ENCODE measurements at regions of chr11 and their contacts with region 1.

Region 1: DNA sequence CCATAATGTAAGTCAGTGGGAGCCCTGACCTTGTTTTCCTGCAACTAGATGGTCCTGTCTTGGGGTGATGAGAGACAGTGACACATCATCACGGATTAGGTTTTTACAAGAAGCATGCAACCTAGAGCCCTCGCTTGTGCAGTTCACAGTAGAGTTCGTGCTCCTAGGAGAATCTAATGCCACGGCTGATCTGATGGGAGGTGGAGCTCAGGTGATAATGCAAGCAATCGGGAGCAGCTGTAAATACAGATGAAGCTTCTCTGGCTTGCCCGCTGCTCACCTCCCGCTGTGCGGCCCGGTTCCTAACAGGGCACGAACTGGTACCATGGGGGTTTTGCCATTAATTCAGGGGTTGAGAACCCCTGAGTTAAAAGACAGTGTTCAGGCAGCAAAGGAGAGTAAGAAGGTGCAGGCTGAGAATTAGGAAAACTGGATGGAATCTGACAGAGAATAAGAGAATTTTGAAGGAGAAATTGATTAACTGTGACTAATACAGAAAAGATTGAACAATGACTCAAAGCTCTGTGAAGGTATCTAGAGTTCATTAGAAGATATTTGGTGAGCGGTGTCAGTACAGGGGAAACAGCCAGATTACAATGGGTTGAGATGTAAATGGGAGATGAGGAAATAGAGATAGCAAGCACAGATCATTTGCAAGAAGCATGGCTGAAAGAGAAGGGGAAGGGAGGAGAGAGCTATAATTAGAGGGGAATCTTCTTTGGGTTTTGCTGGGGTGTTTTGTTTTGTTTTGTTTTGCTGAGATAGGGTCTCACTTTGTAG is 21.0 kb downstream of the WEE1 start:
- DNase-seq: no peak
- ATAC-seq: no peak
- H3K4me3 Mint-ChIP-seq: no peak overlapping the region
- H3K27ac Mint-ChIP-seq: peak overlapping the region; percentile 28
- H3K4me1 Mint-ChIP-seq: peaks cover 36% of the 10 kb centered on the region
- H3K27me3 Mint-ChIP-seq: no peaks in the 10 kb centered on the region
- CTCF ChIP-seq: no peak

Region 2: DNA sequence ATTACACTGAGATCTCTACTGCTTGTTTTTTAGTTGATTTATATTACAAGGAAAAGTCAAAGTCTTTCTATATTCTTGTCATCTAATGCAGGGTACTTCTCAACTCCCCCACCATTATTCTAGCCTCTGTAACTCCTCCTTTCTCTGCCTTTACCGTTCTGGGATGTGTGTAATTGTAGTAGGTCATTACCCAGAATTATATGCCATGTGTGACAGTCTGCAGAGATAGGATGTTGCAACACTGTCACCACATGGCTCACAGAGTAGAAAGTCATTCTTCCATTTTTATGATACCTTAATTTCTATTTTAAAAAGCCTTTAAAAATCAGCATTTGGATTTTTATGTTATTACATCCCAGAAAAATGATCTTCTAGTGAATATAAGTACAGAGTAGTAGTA is 101.0 kb before region 1 on chr11:
- CTCF ChIA-PET with region 1: no interaction called
- POLR2A ChIA-PET with region 1: no interaction called
- intact Hi-C with region 1: no loop called
- DNase-seq: no peak
- ATAC-seq: no peak
- H3K4me3 Mint-ChIP-seq: no peak overlapping the region
- H3K27ac Mint-ChIP-seq: no peak overlapping the region
- H3K4me1 Mint-ChIP-seq: no peaks in the 10 kb centered on the region
- H3K27me3 Mint-ChIP-seq: no peaks in the 10 kb centered on the region
- CTCF ChIP-seq: no peak

Region 3: DNA sequence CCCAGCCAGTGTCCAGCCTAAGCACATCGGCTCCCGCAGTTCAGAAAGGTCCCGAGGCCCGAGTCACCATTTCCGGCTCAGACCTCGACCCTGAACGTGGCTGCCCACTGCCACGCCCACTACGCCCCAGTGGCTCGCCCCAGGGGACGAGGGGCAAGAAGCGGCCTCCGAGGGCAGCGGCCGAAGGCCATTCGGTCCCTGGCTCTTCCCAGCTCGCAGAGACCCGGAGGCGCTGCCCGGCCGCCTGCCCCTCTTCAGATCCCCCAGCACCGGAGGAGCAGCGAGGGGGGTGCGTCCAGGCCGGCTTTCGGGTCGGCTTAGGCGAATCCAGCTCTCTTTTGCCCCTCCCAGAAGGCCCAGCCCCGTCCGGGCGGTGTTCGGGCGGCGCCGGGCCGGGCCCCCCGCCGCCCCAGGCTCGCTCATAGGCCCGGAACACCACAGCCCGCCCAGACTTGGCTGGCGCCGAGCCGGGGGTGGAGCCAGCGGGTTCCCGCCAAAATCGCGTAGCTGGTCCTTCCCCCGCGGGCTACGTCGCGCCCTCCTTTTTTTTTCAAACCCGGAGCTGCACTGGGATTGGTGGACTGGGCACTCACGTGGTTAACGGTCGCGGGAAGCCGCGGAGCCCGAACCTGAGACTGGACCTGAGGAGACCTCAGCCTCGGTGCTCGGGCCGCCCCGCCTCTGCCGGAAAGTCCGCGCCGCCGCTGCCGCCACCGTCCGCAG is 21.2 kb before region 1 on chr11 and contains the start of gene WEE1:
- CTCF ChIA-PET with region 1: interaction called, 4 read pairs
- POLR2A ChIA-PET with region 1: interaction called, 40 read pairs
- intact Hi-C with region 1: no loop called
- DNase-seq: peak; percentile 97
- ATAC-seq: peak; percentile 90
- H3K4me3 Mint-ChIP-seq: peak within 1 kb of the TSS; percentile 95
- H3K27ac Mint-ChIP-seq: peak within 1 kb of the TSS; percentile 85
- H3K4me1 Mint-ChIP-seq: peaks cover 69% of the 10 kb centered on the region
- H3K27me3 Mint-ChIP-seq: no peaks in the 10 kb centered on the region
- CTCF ChIP-seq: no peak
- total RNA-seq, gene WEE1: 29.4 and 33.7 TPM in 2 replicates

Region 4: GRCh38 chr11:9580894-9581293 is 13.6 kb before region 1 on chr11:
- CTCF ChIA-PET with region 1: interaction called, 5 read pairs
- POLR2A ChIA-PET with region 1: interaction called, 15 read pairs
- intact Hi-C with region 1: no loop called
- DNase-seq: no peak
- ATAC-seq: no peak
- H3K4me3 Mint-ChIP-seq: no peak overlapping the region
- H3K27ac Mint-ChIP-seq: peak overlapping the region; percentile 35
- H3K4me1 Mint-ChIP-seq: peaks cover 30% of the 10 kb centered on the region
- H3K27me3 Mint-ChIP-seq: no peaks in the 10 kb centered on the region
- CTCF ChIP-seq: no peak

Region 5: GRCh38 chr11:9672288-9672916 is 77.9 kb after region 1 on chr11:
- CTCF ChIA-PET with region 1: no interaction called
- POLR2A ChIA-PET with region 1: interaction called, 11 read pairs
- intact Hi-C with region 1: no loop called
- DNase-seq: no peak
- ATAC-seq: no peak
- H3K4me3 Mint-ChIP-seq: no peak overlapping the region
- H3K27ac Mint-ChIP-seq: peak overlapping the region; percentile 94
- H3K4me1 Mint-ChIP-seq: peaks cover 71% of the 10 kb centered on the region
- H3K27me3 Mint-ChIP-seq: no peaks in the 10 kb centered on the region
- CTCF ChIP-seq: no peak

Measured in activated B cell treated with CpG ODN at 0.5 μM for 24 hours (primary cell).